Ascending aorta (tissue), 2 donors: ENCODE measurements at regions of chr15 and their contacts with region 1.

Region 1: GRCh38 chr15:99009741-99010370 is 2.3 kb upstream of the PGPEP1L start:
- DNase-seq: no peak
- H3K4me3 ChIP-seq: no peak overlapping the region
- H3K27ac ChIP-seq: no peak overlapping the region
- H3K4me1 ChIP-seq: peaks cover 0 to 3% of the 10 kb centered on the region in 2 donors
- H3K27me3 ChIP-seq: no peaks in the 10 kb centered on the region
- CTCF ChIP-seq: no peak

Region 2: DNA sequence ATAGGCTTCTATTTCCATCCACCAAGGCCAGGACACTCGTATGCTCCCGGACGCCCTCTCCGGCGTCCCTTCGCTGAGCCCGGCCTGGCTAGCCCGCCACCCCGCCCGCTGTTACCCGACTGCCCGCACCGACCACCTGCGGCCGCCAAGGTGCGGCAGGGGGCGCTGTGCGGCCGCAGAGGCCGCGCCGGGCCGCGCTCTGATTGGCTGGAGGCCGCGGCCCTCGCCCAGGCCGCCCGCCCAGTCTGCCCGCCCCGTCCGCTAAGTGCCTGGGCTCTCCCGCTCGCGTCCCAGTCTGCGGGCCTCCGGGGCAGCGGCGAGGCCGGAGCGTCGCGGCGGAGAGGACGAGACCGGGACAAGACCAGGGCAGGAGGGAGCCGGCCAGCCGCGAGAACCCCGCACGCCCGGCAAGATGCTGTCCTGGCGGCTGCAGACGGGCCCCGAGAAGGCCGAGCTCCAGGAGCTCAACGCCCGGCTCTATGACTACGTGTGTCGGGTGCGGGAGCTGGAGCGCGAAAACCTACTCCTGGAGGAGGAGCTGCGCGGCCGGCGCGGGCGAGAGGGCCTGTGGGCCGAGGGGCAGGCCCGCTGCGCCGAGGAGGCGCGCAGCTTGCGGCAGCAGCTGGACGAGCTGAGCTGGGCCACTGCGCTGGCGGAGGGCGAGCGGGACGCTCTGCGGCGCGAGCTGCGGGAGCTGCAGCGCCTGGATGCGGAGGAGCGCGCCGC is 95.1 kb after region 1 on chr15 and contains the start of gene SYNM:
- intact Hi-C with region 1: no loop called
- DNase-seq: peak in 1 of 2 donors; percentile 92
- H3K4me3 ChIP-seq: peak within 1 kb of the TSS; percentile 76
- H3K27ac ChIP-seq: peak within 1 kb of the TSS; percentile 89 to 95
- H3K4me1 ChIP-seq: peaks cover 11 to 29% of the 10 kb centered on the region in 2 donors
- H3K27me3 ChIP-seq: no peaks in the 10 kb centered on the region
- CTCF ChIP-seq: peak; percentile 49 to 98 (median 70)
- total RNA-seq, gene SYNM: 37.7 TPM

Region 3: GRCh38 chr15:100043015-100043641 is 1033.3 kb after region 1 on chr15:
- intact Hi-C with region 1: loop called (anchors 5 kb)
- DNase-seq: no peak
- H3K4me3 ChIP-seq: peak overlapping the region; percentile 1 to 32
- H3K27ac ChIP-seq: peak overlapping the region; percentile 48 to 58
- H3K4me1 ChIP-seq: peaks cover 0 to 10% of the 10 kb centered on the region in 2 donors
- H3K27me3 ChIP-seq: no peaks in the 10 kb centered on the region
- CTCF ChIP-seq: no peak